ENCODE measurements at regions of chr4 and their contacts with region 1.

Region 1: DNA sequence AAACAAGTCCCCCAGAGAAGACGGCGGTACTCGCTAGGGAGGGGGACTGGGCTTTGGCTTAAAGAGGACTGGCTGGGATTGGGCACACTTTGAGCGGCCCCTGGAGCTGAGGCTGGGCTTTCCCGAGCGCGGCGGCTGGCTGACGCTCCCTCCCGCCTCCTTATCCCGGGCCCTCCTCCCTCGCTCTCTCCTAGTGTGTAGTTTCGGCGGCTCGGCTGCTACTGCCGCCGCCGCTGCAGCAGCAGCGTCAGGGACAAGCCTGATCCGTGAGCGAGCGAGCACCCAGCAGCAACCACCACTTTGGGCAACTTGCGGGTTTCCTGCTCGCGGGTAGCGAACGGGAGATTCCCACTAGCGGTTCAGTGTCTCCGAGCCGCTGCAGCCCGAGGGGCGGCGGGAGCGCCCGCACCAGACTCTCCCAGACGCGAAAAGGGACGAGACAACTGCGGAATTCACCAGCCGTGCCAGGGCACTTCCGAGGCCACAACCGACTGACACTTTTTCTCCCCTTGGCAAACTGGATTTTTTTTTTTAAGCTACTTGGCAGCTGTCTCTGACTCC is 629 bp upstream of the PCDH7 start:
- DNase-seq: peak; percentile 59 to 73
- H3K4me3 ChIP-seq: peak overlapping the region; percentile 38
- H3K4me1 ChIP-seq: peaks cover 14% of the 10 kb centered on the region; the same call in 1 of the 2 replicates
- H3K27me3 ChIP-seq: peaks cover 22% of the 10 kb centered on the region

Region 2: DNA sequence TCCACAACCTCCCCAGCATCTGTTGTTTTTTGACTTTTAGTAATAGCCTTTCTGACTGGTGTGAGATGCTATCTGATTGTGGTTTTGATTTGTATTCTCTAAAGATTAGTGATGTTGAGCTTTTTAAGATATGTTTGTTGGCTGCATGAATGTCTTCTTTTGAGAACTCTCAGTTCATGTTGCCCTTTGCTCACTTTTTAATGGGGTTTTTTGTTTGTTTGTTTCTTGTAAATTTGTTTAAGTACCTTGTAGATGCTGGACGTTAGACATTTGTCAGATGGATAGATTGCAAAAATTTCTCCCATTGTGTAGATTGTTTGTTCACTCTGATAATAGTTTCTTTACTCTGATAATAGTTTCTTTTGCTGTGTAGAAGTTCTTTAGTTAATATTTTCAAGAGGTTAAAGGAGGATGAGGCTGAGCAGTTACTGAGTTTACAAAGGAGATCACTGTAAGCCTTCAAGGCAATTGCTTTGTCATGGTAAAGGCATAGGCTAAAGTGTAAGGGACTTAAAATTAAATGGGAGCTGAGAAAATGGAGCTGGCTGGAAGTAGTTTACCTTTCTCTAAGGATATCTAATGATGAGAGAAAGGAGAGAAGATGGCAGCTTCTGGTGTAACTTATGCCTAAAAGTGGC is 324.0 kb after region 1 on chr4:
- in situ Hi-C with region 1: loop called (anchors 5 kb)
- DNase-seq: peak; percentile 25 to 98
- H3K4me3 ChIP-seq: no peak overlapping the region
- H3K4me1 ChIP-seq: peaks cover 15% of the 10 kb centered on the region
- H3K27me3 ChIP-seq: peaks cover 2% of the 10 kb centered on the region; the same call in 1 of the 2 replicates